Aorta (tissue), 5 donors: ENCODE measurements at regions of chr19 and their contacts with region 1.

Region 1: DNA sequence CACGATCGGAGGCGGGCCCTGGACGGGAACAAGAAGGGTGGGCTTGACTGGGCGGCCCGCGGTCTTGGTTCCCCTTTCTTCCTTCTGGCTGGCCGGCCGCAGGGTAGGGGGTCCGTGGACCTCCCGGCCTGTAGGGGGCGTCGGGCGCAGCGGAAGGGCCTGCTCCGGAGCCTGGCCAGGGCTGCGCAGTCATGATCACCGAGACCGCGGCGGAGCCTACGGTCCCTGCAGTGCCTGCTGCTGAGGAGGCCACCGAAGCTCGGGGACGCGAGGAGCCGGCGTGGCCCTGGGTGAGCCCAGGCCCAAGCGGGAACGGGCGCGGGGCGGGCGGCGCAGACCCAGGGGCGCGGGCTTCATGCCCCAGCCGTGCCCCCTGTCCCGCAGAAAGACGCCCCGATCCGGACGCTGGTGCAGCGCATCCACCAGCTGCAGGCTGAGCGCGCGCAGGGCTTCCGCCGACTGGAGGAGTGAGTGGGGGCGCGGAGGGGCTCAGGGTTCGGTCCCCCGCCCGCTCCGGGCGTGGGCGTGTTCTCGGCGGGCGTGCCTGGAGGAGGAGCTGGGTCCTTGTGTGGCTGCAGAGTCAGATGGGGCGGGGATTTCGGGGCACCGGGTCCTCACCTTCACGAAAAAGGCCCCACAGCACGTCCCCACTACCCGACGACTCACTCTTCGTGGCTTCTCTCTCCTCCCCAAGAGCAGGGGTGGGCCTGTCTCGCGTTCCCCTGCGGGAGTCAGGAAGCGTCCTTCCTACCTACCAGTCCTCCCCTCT is at the start of gene REX1BD:
- DNase-seq: peak; percentile 95
- ATAC-seq: peak; percentile 92
- H3K4me3 ChIP-seq: peak within 1 kb of the TSS; percentile 68 to 80
- H3K27ac ChIP-seq: peak within 1 kb of the TSS in 1 of 2 donors; percentile 79
- H3K4me1 ChIP-seq: no peaks in the 10 kb centered on the region
- H3K27me3 ChIP-seq: no peaks in the 10 kb centered on the region
- total RNA-seq, gene REX1BD: 33.3 to 67.1 TPM

Region 2: GRCh38 chr19:18456974-18457373 is 131.8 kb before region 1 on chr19:
- intact Hi-C with region 1: loop called in 1 of 2 experiments (anchors 5 kb)
- DNase-seq: peak; percentile 81 to 92
- ATAC-seq: peak; percentile 22
- H3K4me3 ChIP-seq: no peak overlapping the region
- H3K27ac ChIP-seq: peak overlapping the region in 1 of 2 donors; percentile 14
- H3K4me1 ChIP-seq: no peaks in the 10 kb centered on the region
- H3K27me3 ChIP-seq: no peaks in the 10 kb centered on the region